Natural killer cell (primary cell): ENCODE measurements at regions of chr9 and their contacts with region 1.

Region 1: DNA sequence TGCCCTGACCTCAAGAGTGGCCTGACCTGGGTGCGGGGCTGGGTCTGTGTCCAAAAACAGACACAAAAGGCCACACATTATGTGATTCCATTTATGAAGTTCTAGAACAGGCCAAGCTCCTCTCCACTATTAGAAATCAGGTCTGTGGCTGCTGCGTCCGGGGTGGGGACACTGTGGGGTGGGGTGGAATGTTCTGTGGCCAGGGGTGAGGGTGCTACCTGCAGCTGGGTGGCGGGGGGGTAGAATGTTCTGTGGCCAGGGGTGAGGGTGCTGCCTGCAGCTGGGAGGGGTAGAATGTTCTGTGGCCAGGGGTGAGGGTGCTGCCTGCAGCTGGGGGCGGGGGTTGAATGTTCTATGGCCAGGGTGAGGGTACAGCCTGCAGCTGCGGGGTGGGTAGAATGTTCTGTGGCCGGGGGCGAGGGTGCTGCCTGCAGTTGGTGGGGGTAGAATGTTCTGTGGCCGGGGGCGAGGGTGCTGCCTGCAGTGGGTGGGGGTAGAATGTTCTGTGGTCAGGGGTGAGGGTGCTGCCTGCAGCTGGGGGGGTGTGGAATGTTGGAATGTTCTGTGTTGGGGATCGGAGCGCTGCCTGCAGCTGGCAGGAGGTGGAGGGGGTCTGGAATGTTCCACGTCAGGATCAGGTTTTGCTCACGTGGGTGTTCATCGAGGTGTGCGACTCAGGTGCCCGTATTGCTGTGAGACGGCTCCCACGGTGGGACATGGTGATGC is 8.3 kb downstream of the LCN12 start:
- DNase-seq: peak in 1 of 2 donors; percentile 57
- ATAC-seq: peak; percentile 60 to 84 (median 61)
- H3K4me3 ChIP-seq: no peak overlapping the region
- H3K4me3 Mint-ChIP-seq: peak overlapping the region; percentile 79
- H3K27ac ChIP-seq: peak overlapping the region; percentile 90
- H3K27ac Mint-ChIP-seq: peak overlapping the region; percentile 85 to 87
- H3K4me1 ChIP-seq: peaks cover 83% of the 10 kb centered on the region
- H3K4me1 Mint-ChIP-seq: peaks cover 29 to 79% of the 10 kb centered on the region in 2 donors
- H3K27me3 ChIP-seq: no peaks in the 10 kb centered on the region
- H3K27me3 Mint-ChIP-seq: no peaks in the 10 kb centered on the region
- CTCF ChIP-seq: no peak

Region 2: DNA sequence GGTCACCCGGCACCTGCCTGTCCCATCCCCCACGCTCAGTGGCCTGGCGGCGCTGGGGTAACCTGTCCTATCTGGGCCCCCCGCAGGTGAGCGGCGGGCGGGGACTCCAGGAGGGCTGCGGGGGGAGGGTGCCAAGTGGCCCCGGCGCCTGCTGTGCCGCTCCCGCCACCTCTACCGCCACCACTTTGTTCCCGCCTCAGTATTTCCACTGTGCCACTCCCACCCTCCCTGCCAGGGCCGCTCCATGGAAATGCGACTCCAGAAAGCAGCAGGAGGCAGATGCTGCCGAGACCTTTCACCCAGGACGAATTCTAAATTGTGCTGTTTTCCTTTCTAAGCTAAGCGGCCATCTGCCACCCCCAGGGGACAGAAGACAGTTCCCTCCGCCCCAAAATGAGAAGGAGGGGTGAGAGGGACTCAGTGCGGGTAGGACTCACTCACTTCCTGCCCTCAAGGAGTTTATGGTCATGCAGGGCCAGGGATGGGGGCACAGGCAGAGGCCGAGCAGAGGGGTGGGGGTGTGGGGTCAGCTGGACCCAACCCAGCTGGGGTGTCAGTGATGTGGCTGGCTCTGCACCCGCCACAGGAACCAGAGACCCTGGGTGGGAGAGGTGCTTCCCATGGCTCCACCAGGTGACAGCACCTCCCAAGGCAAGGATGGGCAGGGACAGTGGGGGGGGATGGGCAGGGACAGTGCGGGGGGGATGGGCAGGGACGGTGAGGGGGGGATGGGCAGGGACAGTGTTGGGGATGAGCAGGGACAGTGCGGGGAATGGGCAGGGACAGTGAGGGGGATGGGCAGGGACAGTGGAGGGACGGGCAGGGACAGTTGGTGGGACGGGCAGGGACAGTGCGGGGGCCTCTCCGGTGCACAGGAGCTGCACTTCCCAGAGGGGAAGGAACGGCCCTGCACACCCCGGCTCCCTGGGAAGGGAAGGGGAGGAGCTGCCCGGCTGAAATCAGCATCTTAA is 432.4 kb before region 1 on chr9:
- intact Hi-C with region 1: no loop called
- DNase-seq: peak in 1 of 2 donors; percentile 40
- ATAC-seq: peak in 2 of 3 donors; percentile 18 to 48
- H3K4me3 ChIP-seq: no peak overlapping the region
- H3K4me3 Mint-ChIP-seq: peak overlapping the region; percentile 47
- H3K27ac ChIP-seq: peak overlapping the region; percentile 53
- H3K27ac Mint-ChIP-seq: peak overlapping the region; percentile 41 to 85
- H3K4me1 ChIP-seq: peaks cover 87% of the 10 kb centered on the region
- H3K4me1 Mint-ChIP-seq: peaks cover 28 to 65% of the 10 kb centered on the region in 2 donors
- H3K27me3 ChIP-seq: no peaks in the 10 kb centered on the region
- H3K27me3 Mint-ChIP-seq: no peaks in the 10 kb centered on the region
- CTCF ChIP-seq: no peak

Region 3: DNA sequence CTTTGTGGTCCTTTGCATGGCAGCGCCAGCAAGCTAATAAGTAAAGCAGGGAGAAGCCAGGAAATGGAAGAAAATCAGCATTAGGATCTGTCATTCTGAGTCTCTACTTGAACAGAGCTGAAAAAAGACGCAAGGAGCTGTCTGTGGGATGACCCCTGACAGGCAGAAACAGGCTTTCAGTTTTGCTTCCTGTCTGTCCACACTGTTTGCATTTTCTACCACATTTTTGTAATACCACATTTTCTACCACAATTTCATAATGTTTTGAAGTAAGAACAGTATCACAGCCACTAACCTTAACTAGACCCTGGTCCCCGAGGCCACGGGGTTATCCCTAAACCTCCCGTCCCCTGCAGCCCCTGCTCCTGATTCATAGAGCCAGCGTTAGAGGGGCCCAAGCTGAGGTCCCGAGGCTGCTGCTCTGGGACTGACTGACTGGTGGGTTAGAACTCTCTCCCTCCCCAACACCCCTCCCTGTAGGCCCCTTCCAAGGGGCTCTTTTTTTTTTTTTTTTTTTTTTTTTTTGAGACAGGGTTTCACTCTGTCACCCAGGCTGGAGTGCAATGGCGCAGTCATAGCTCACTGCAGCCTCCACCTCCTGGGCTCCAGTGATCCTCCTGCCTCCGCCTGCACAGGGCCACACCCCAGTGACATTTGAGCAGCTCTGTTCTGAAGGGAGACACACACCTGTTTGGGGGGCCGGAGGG is 40.0 kb after region 1 on chr9:
- intact Hi-C with region 1: loop called (anchors 1 kb)
- DNase-seq: peak; percentile 56 to 70
- ATAC-seq: peak; percentile 35 to 63 (median 44)
- H3K4me3 ChIP-seq: no peak overlapping the region
- H3K4me3 Mint-ChIP-seq: peak overlapping the region; percentile 84
- H3K27ac ChIP-seq: peak overlapping the region; percentile 77
- H3K27ac Mint-ChIP-seq: peak overlapping the region; percentile 97 to 99
- H3K4me1 ChIP-seq: peaks cover 77% of the 10 kb centered on the region
- H3K4me1 Mint-ChIP-seq: peaks cover 32 to 54% of the 10 kb centered on the region in 2 donors
- H3K27me3 ChIP-seq: no peaks in the 10 kb centered on the region
- H3K27me3 Mint-ChIP-seq: no peaks in the 10 kb centered on the region
- CTCF ChIP-seq: no peak

Region 4: DNA sequence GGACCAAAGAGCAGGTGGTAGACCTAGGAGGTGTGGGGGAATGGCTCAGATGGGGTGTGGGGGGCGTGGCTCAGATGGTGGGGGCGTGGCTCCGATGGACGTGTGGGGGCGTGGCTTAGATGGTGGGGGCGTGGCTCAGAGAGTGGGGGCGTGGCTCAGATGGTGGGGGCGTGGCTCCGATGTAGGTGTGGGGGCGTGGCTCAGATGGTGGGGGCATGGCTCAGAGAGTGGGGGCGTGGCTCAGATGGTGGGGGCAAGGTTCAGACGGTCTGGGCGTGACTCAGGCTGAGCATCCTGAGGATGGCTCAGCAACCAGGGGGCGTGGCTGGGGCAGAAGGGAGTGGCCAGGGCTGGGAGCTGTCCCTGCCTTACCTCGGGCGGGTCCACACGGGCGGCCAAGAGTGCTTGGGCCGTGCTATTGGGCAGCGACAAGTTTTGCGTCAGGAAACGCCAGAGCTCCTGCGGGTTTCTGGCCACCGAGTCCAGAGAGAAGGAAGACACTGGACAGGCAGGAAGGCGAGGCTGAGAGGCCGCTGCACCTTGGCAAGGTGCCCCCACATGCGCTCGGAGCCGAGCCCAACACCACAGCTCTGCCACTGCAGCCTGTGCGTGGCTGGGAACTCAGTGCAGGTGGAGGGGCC is 61.7 kb after region 1 on chr9:
- intact Hi-C with region 1: no loop called
- DNase-seq: peak; percentile 49 to 85
- ATAC-seq: peak; percentile 86 to 92 (median 91)
- H3K4me3 ChIP-seq: no peak overlapping the region
- H3K4me3 Mint-ChIP-seq: no peak overlapping the region
- H3K27ac ChIP-seq: no peak overlapping the region
- H3K27ac Mint-ChIP-seq: peak overlapping the region in 1 of 2 donors; percentile 72
- H3K4me1 ChIP-seq: peaks cover 34% of the 10 kb centered on the region
- H3K4me1 Mint-ChIP-seq: peaks cover 6 to 27% of the 10 kb centered on the region in 2 donors
- H3K27me3 ChIP-seq: no peaks in the 10 kb centered on the region
- H3K27me3 Mint-ChIP-seq: no peaks in the 10 kb centered on the region
- CTCF ChIP-seq: no peak